Panc1 (cell line): ENCODE measurements at regions of chr10 and their contacts with region 1.

Region 1: GRCh38 chr10:43760514-43760913 is 111.8 kb upstream of the ZNF32 start:
- DNase-seq: no peak
- ATAC-seq: no peak; the same call in 1 of the 2 replicates
- H3K4me3 ChIP-seq: no peak overlapping the region
- H3K27ac ChIP-seq: no peak overlapping the region
- H3K4me1 ChIP-seq: no peaks in the 10 kb centered on the region
- H3K27me3 ChIP-seq: no peaks in the 10 kb centered on the region
- CTCF ChIP-seq: no peak

Region 2: GRCh38 chr10:42769653-42770052 is 990.9 kb before region 1 on chr10:
- CTCF ChIA-PET with region 1: no interaction called
- POLR2A ChIA-PET with region 1: interaction called, 10 read pairs
- in situ Hi-C with region 1: no loop called
- intact Hi-C with region 1: no loop called
- DNase-seq: no peak
- ATAC-seq: peak; percentile 92
- H3K4me3 ChIP-seq: peak overlapping the region; percentile 40 to 66
- H3K27ac ChIP-seq: peak overlapping the region; percentile 26; the same call in 1 of the 2 replicates
- H3K4me1 ChIP-seq: no peaks in the 10 kb centered on the region; the same call in 1 of the 2 replicates
- H3K27me3 ChIP-seq: peaks cover 6% of the 10 kb centered on the region
- CTCF ChIP-seq: no peak

Region 3: DNA sequence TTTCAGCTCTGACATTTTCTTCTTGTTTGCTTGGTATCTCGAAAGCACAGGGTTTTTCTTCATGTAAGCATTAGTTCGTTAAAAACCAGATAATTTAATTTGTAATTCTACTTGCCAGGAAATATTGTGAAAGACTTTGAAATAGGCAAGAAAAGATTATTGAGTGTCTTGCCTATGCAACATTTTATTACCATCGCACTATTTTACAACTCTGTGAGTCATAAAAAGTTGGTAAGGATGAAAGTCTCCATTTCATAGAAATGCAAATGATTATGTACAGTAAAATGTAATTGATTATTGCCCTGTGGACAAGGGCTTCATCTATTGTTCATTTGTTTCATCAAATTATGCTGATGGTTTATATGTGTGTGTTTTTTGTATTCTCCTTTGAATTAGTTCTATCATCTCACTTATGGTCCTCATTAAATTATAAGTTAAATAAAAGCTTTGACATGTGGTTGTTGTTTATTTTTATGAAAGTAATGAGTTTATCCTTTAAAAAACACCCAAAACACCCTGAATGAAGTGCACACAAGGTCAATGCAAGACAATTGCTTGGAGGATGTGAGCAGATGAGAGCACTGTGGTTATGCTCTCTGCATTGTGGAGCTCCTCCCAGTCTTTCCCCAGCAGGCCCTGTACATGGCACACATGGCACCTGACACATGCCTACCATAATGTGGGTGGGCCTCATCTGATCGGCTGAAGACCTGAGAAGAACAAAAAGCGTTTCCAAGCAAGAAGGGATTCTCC is 393.6 kb after region 1 on chr10:
- CTCF ChIA-PET with region 1: no interaction called
- POLR2A ChIA-PET with region 1: no interaction called
- in situ Hi-C with region 1: no loop called
- intact Hi-C with region 1: no loop called
- DNase-seq: no peak
- ATAC-seq: no peak
- H3K4me3 ChIP-seq: no peak overlapping the region
- H3K27ac ChIP-seq: no peak overlapping the region
- H3K4me1 ChIP-seq: no peaks in the 10 kb centered on the region
- H3K27me3 ChIP-seq: no peaks in the 10 kb centered on the region
- CTCF ChIP-seq: no peak